Astrocyte of the cerebellum (primary cell): ENCODE measurements at regions of chrX and their contacts with region 1.

Region 1: DNA sequence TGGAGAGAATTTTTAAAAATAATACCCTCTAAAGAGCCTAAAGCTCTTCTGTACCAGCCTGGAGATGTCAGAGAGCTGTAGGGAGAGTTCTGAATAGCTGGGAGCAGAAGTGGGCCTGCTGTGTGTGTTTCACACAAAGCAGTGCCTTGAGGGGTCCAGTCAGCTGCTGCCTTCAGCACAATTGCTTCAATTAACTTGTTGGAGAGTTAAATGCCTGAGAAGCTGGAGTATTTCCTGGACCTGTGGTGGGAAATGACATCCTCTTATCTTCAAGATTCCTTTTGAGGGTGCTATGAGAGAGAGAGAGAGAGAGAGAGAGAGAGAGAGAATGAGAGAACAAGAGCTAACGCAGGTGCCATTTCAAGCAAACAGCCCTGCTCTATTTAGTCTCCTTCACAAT is 96.2 kb upstream of the IL1RAPL2 start:
- DNase-seq: no peak
- H3K4me3 ChIP-seq: no peak overlapping the region
- CTCF ChIP-seq: no peak

Region 2: GRCh38 chrX:103396186-103396585 is 1073.6 kb before region 1 on chrX:
- in situ Hi-C with region 1: no loop called
- DNase-seq: no peak
- H3K4me3 ChIP-seq: no peak overlapping the region
- CTCF ChIP-seq: no peak

Region 3: DNA sequence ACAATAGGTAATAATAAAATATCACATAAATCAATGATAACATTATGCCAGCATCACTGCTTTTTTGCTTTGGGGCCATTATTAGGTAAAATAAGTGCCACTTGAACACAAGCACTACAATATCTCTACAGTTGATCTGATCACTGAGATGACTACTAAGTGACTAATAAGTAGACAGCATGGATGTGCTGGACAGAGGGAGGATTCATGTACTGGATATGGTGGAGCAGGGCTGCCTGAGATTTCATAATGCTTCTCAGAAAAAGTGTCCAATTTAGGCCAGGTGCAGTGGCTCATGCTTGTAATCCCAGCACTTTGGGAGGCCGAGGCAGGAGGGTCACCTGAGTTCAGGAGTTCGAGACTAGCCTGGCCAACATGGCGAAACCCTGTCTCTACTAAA is 41.5 kb before region 1 on chrX:
- in situ Hi-C with region 1: loop called (anchors 5 kb)
- DNase-seq: no peak
- H3K4me3 ChIP-seq: no peak overlapping the region
- CTCF ChIP-seq: no peak

Region 4: GRCh38 chrX:104565791-104566680 is 96.3 kb after region 1 on chrX and contains the start of gene IL1RAPL2:
- in situ Hi-C with region 1: no loop called
- DNase-seq: peak; percentile 13
- H3K4me3 ChIP-seq: peak within 1 kb of the TSS; percentile 38
- CTCF ChIP-seq: peak; percentile 88